ENCODE measurements at regions of chr3 and their contacts with region 1.

Region 1: DNA sequence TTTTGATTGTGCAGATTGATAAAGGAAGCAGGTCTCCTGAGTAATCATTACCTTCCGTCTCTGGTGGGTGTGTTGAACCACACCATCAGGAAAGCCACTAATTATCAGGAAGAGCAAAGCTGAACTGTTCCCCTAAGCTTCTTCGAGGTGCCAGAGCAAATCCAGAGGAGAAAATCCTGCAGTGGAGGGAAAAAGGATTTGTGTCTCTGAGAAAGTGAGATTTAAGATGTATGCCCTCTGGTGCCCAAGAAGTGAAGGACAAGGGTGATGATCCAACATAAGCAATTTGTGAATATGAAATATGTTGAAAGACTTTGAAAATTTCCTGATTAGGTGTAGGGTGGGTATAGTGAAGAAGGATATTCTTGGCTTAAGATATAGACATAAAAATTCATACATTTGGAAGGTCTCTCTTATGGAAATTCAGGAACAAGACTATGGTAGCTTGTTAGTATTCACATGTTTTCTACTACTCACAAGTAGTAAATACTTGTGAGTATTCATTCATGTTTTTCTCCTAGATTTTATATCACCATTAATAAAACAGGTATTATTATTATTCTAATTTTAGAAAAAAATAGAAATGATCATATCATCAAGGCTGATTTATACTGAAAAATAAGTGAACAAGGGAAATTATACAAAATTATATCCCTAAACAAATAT is 34.8 kb downstream of the COMMD2 start:
- DNase-seq: peak; percentile 53
- H3K4me3 ChIP-seq: no peak overlapping the region
- H3K27ac ChIP-seq: no peak overlapping the region
- H3K4me1 ChIP-seq: no peaks in the 10 kb centered on the region
- H3K27me3 ChIP-seq: no peaks in the 10 kb centered on the region
- CTCF ChIP-seq: peak in 3 of 4 experiments; percentile 74 to 88 (median 82)
- POLR2A ChIP-seq: no peak

Region 2: GRCh38 chr3:149512209-149512782 is 205.2 kb before region 1 on chr3:
- intact Hi-C with region 1: loop called (anchors 1 kb)
- DNase-seq: peak; percentile 68
- H3K4me3 ChIP-seq: no peak overlapping the region
- H3K27ac ChIP-seq: no peak overlapping the region
- H3K4me1 ChIP-seq: no peaks in the 10 kb centered on the region
- H3K27me3 ChIP-seq: no peaks in the 10 kb centered on the region
- CTCF ChIP-seq: peak; percentile 45 to 84 (median 78)
- POLR2A ChIP-seq: no peak

Measured in prostate gland (tissue), 2 donors.